Psoas muscle (tissue), 8 donors: ENCODE measurements at regions of chr17 and their contacts with region 1.

Region 1: DNA sequence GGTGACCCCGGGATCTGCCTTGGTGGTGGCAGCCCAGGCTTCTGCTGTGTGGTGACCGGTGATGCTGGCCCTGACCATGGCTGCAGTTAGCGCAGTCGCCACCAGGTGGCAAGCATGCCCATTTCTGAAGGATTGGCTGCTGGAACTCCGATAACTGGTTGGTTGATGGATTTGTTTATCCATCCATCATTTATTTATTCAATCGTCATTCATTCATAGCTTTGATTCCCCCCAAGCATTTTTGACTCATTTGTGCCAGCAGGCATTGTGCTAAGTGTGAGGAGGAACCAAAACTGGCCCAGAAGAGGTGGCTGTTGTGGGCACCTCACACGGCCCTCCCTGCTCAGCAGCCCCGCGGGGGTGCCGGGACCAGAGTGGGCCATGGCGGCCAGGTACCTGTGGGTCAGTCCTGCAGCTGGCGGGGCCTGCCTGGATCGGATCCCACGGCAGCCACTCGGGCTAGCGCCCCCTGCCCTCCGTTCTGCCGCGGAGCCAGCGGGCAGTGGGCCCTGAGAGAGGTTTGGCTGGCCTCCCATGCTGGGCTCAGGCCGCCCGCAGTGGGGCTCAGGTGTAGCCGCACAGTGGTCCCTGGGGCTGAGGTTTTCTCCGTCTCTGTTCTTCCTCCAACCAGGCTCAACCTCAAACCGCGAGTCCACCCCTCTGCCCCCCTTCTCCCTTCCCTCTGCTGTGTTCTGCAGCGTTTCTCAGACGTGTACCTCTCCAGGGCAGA is 28.8 kb upstream of the ITGA3 start:
- DNase-seq: peak; percentile 85 to 90
- ATAC-seq: peak; percentile 87 to 97 (median 90)
- H3K4me3 ChIP-seq: peak overlapping the region; percentile 30
- H3K27ac ChIP-seq: peak overlapping the region; percentile 23
- H3K4me1 ChIP-seq: peaks cover 6% of the 10 kb centered on the region
- H3K27me3 ChIP-seq: peaks cover 0 to 17% (median 2%) of the 10 kb centered on the region in 3 donors
- CTCF ChIP-seq: peak; percentile 99

Region 2: DNA sequence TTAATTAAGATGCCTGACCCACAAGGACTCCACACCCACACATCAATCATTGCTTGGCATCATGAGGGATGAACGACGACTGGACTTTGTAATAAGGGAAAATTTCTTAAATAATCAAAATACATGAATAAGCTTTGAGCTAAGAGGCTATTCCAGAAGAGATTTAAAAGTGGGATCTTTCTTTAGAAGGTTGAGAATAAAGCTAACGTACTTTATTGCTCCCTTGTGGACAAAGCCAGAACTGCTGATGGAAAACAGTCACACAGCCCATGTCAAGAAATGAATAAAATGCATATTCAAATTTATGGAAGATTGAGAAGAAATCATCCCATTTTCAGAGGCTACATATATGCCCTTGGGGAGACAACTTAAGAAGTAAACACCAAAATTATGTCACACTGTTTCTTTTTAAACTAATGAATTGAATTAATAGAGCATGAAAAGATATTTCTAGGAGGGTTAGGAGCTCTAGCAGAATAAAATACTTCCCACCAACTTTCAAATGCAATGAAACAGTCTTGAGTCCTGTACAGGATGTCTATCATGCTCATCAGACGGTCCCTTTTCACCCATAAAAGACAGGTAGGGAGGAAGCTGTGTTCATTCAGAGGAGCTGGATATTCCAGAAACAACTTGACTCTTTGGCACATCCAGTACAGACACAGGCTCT is 736.2 kb before region 1 on chr17:
- intact Hi-C with region 1: no loop called
- DNase-seq: no peak
- ATAC-seq: peak in 2 of 4 donors; percentile 50 to 55
- H3K4me3 ChIP-seq: no peak overlapping the region
- H3K27ac ChIP-seq: no peak overlapping the region
- H3K4me1 ChIP-seq: no peaks in the 10 kb centered on the region
- H3K27me3 ChIP-seq: no peaks in the 10 kb centered on the region
- CTCF ChIP-seq: peak; percentile 67

Region 3: DNA sequence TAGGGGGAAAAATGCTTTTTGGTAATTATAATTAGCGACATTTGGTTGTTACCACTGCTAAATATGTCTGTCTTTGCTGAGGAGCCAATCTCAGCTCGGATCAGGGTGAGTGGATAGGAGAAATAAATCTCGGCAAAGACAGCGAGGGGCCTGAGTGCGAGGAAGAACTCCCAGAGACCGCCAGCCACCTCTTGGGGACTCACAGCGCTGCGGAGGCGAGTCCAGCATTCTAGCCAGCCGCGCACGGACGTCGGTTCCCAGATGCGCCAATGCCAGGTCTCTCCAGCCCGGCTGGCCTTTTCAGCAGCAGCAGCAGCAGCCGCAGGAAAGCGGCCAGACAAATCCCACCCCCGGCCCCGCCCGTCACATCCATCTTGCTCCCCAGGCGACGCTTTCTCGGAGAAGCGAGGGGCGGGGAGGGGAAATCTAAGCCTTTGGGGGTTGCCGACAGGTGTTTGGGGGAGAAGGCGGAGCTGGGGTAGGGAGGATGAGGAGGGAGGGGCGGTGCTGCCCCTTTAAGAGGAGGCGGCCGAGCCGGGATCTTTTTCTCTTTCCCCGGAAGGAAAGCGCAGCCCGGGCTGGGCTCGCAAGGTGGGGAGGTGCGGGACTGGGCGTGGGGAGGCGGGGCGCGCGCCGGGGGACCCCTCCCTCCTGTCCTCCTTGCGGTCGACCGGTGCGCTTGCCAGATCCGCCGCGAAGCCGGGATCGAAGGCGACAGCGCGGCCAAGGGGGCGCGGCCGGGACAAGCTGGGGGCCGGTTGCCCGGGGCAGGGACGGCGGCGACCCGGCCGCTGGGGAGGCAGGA is 28.6 kb after region 1 on chr17 and contains the start of gene ITGA3:
- intact Hi-C with region 1: loop called in 1 of 2 experiments (anchors 2 kb)
- DNase-seq: peak; percentile 76 to 82
- ATAC-seq: peak; percentile 61 to 71 (median 66)
- H3K4me3 ChIP-seq: peak within 1 kb of the TSS; percentile 76
- H3K27ac ChIP-seq: peak within 1 kb of the TSS; percentile 87
- H3K4me1 ChIP-seq: peaks cover 47% of the 10 kb centered on the region
- H3K27me3 ChIP-seq: no peaks in the 10 kb centered on the region
- CTCF ChIP-seq: no peak
- total RNA-seq, gene ITGA3: 7.8 to 21.9 (median 15.0) TPM

Region 4: GRCh38 chr17:50087246-50087911 is 60.3 kb after region 1 on chr17:
- intact Hi-C with region 1: loop called (anchors 1 to 2 kb)
- DNase-seq: peak; percentile 75 to 85
- ATAC-seq: peak; percentile 88 to 94 (median 91)
- H3K4me3 ChIP-seq: no peak overlapping the region
- H3K27ac ChIP-seq: no peak overlapping the region
- H3K4me1 ChIP-seq: no peaks in the 10 kb centered on the region
- H3K27me3 ChIP-seq: no peaks in the 10 kb centered on the region
- CTCF ChIP-seq: peak; percentile 98

Region 5: GRCh38 chr17:50139950-50140871 is 113.1 kb after region 1 on chr17:
- intact Hi-C with region 1: no loop called
- DNase-seq: peak; percentile 80 to 91
- ATAC-seq: peak; percentile 83 to 90 (median 88)
- H3K4me3 ChIP-seq: no peak overlapping the region
- H3K27ac ChIP-seq: peak overlapping the region; percentile 27
- H3K4me1 ChIP-seq: peaks cover 4% of the 10 kb centered on the region
- H3K27me3 ChIP-seq: no peaks in the 10 kb centered on the region
- CTCF ChIP-seq: peak; percentile 97